ENCODE measurements at regions of chr10 and their contacts with region 1.

Region 1: GRCh38 chr10:26860443-26861204 is at the start of gene ABI1:
- DNase-seq: peak; percentile 91
- H3K4me3 ChIP-seq: peak within 1 kb of the TSS; percentile 93
- H3K27me3 ChIP-seq: no peaks in the 10 kb centered on the region; the same call in 1 of the 2 replicates
- CTCF ChIP-seq: no peak
- polyA plus RNA-seq, gene ABI1: 67.0 and 71.1 TPM in 2 replicates

Region 2: GRCh38 chr10:26840938-26841732 is 19.5 kb before region 1 on chr10:
- CTCF ChIA-PET with region 1: no interaction called
- POLR2A ChIA-PET with region 1: interaction called, 18 read pairs
- DNase-seq: no peak
- H3K4me3 ChIP-seq: no peak overlapping the region
- H3K27me3 ChIP-seq: no peaks in the 10 kb centered on the region
- CTCF ChIP-seq: no peak

Measured in BJ (cell line).